ENCODE measurements at regions of chr10 and their contacts with region 1.

Region 1: DNA sequence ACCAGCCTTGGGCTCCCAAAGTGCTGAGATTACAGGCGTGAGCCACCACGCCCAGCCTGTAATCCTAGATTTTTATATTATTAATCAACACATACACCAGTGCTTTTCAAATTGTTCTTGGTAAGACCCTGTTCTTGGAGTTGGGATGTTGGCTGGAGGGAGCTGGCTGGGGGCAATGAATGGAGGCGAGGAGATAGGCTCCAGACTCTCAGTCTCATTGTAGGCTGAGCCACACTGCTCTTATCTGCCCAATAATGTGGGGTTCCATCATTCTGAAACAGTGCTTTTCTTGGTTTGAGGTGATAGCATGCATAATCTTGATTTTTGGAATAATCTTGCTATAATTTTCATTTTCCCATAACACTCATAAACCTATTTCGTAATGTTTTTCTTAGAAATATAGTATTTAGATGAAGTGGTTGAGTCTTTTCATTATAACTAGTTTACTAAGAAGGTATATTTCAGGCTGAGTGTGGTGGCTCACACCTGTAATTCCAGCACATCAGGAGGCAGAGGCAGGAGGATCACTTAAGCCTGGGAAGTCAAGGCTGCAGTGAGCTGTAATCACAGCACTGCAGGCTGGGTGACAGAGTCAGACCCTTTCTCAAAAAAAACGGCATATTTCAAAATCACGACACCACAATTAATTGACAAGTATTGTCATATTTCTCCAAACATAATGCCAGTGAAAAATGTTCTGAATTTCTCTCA is 65.1 kb upstream of the LYZL2 start:
- DNase-seq: no peak
- ATAC-seq: no peak
- H3K4me3 Mint-ChIP-seq: no peak overlapping the region
- H3K27ac Mint-ChIP-seq: no peak overlapping the region
- H3K4me1 Mint-ChIP-seq: peaks cover 30% of the 10 kb centered on the region
- H3K27me3 Mint-ChIP-seq: no peaks in the 10 kb centered on the region

Region 2: DNA sequence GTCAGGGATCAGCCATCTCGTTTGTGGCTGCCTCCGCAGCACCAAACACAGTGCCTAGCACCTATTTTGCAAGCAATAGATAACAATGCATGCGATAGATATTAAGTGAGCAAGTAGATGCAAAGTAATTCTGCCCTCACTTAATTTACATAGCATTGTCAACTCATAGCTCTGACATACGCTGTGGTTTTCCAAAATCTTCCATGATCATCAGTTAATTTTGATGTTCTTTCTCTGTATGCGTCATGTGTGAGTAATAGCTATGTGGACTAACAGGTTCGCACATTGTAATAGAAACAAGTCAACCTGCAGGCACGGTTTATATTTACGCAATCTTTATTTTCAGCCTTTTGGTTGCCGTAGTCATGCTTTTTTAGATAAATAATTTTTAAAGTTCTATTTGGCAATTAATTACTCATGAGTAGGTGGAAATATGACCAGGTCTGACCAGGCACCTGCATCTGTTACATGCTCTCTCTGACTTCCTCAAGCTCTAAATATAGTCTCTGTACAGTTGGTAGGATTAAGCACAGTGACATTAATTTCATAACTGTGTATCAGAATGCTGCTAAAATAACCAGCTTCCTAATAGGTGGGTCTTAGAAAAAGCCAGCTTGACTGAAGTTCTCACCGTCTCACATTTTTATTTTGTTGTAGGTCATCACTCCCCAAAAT is 247.4 kb before region 1 on chr10:
- POLR2A ChIA-PET with region 1: no interaction called
- DNase-seq: no peak
- ATAC-seq: no peak
- H3K4me3 Mint-ChIP-seq: no peak overlapping the region
- H3K27ac Mint-ChIP-seq: no peak overlapping the region
- H3K4me1 Mint-ChIP-seq: peaks cover 16% of the 10 kb centered on the region
- H3K27me3 Mint-ChIP-seq: no peaks in the 10 kb centered on the region

Region 3: GRCh38 chr10:30639946-30640786 is 54.5 kb before region 1 on chr10:
- POLR2A ChIA-PET with region 1: no interaction called
- DNase-seq: no peak
- ATAC-seq: no peak
- H3K4me3 Mint-ChIP-seq: no peak overlapping the region
- H3K27ac Mint-ChIP-seq: no peak overlapping the region
- H3K4me1 Mint-ChIP-seq: peaks cover 2% of the 10 kb centered on the region
- H3K27me3 Mint-ChIP-seq: peaks cover 58% of the 10 kb centered on the region

Region 4: DNA sequence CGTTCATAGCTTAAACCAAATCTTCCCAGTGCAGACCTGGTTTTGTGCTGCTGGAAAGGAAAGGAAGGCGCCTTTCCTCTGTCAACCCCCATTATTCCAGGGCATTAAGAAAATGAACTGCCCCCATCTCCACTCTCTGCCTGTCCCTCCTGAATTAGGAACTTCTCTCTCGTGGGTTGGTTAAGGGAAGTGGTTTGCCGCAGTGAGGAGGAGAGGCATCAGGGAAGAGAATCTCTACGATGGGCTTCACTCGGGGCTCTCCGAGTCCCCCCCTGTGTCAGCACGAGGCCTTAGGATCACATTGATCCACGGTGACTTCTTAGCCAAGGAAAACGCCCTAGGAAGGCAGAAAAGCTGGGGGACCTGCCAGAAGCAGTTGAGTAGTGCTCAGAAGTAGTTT is 11.2 kb before region 1 on chr10:
- POLR2A ChIA-PET with region 1: no interaction called
- DNase-seq: no peak
- ATAC-seq: no peak
- H3K4me3 Mint-ChIP-seq: no peak overlapping the region
- H3K27ac Mint-ChIP-seq: no peak overlapping the region
- H3K4me1 Mint-ChIP-seq: peaks cover 14% of the 10 kb centered on the region
- H3K27me3 Mint-ChIP-seq: peaks cover 62% of the 10 kb centered on the region

Region 5: DNA sequence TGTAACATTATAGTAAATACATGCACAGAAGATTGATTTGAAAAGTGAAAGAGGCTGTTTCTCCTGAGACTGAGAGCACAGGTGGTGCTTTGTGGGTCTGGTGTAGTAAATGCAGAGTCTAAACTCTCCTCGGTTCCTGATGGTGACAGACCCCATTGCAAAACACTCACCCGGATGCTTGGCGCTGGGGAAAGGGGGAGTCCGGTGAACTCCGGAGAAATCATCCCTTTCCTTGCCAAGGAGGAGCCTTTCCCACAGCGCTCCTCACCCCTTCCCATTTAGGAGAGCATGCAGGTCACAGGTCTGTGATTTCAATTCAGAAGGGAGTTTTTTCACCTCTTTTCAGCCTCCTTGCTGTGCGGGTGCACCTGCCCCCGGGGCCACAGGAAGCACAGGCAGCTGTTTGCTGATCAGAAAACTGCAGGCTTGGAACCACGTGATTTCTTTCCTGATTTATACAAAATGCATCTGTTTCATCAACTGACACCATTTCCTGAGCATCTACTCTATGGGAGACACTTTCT is 10.5 kb after region 1 on chr10:
- POLR2A ChIA-PET with region 1: interaction called, 12 read pairs
- DNase-seq: peak; percentile 54
- ATAC-seq: peak; percentile 14
- H3K4me3 Mint-ChIP-seq: peak overlapping the region; percentile 92
- H3K27ac Mint-ChIP-seq: peak overlapping the region; percentile 98
- H3K4me1 Mint-ChIP-seq: peaks cover 42% of the 10 kb centered on the region
- H3K27me3 Mint-ChIP-seq: no peaks in the 10 kb centered on the region

Region 6: DNA sequence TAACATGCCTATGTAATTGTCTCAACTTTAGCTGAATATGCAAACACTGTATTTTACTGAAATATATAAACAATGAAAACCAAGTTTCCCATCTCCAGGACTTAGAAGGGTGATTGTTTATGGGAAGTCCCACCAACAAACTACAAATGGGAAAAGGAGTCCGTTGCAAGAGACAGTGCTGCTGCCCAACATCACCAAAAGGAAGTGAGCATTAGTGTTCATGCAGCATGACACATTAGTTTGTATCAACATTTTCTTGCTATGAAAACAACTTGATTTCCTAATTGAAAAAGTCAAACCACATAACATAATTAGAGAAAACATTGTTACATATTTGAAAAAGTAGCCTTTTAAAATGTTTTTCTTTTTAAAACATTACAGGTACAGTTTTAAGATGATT is 198.5 kb after region 1 on chr10:
- POLR2A ChIA-PET with region 1: no interaction called
- DNase-seq: no peak
- ATAC-seq: no peak
- H3K4me3 Mint-ChIP-seq: no peak overlapping the region
- H3K27ac Mint-ChIP-seq: no peak overlapping the region
- H3K4me1 Mint-ChIP-seq: no peaks in the 10 kb centered on the region
- H3K27me3 Mint-ChIP-seq: no peaks in the 10 kb centered on the region